ENCODE measurements at regions of chr1 and their contacts with region 1.

Region 1: DNA sequence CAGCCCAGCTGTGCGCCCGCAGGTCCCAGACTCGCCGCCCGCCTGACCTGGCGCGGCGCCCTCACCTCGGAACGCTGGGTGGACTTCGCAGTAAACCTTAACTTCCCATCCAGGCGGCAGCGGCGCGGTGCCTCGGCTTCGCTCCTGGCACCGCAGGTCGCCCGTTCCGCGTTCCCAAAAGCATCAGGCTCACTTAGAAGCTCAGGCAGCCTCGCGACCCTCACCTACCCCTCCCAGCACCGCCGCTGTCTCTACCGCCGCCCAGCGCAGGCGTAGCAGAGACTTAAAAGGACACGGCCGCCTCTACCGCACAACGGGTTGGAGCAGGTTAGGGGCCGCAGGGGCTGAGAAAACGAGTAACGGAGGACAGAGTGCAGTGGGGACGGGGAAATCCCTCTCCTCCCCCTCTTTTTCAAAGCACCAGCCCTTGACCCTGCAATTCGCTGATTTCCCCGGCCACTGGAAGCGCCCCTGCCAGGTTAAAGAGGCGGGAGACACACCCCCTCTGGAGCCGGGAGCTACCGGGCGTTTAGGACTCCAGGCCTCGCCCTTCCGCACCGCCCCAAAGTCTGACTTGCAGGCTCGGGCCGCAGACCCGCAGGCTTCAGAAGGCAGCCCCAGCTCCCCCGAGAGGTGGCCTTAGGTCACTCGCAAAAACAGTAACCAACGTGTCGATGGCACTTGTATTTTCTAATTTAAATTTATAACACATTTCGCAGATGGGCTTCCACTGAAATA is 328.5 kb downstream of the FAM72C start:
- DNase-seq: no peak
- H3K4me3 ChIP-seq: no peak overlapping the region
- H3K27ac ChIP-seq: no peak overlapping the region
- H3K4me1 ChIP-seq: no peaks in the 10 kb centered on the region
- H3K27me3 ChIP-seq: peaks cover 57% of the 10 kb centered on the region
- CTCF ChIP-seq: no peak

Region 2: DNA sequence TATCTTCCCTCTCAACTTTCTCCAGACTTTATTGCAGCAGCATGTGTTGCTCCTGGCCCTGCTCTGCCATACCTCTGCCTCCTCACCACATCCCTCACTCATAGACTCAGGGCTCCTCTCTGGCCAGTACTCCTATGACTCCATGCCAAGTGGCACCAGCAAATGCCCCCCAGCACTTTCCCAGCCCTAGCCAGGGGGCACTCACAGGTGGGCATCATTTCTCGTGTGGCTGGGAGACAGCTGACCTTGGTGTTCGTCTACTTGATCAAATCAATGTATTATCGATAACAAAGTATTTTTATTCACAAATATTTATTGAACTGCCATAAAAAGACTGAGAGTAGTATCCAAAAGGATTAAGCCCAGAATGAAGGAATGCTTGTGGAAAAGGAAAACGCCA is 89.7 kb before region 1 on chr1:
- CTCF ChIA-PET with region 1: no interaction called
- POLR2A ChIA-PET with region 1: interaction called, 17 read pairs
- intact Hi-C with region 1: no loop called
- DNase-seq: no peak
- H3K4me3 ChIP-seq: no peak overlapping the region
- H3K27ac ChIP-seq: no peak overlapping the region
- H3K4me1 ChIP-seq: no peaks in the 10 kb centered on the region
- H3K27me3 ChIP-seq: no peaks in the 10 kb centered on the region
- CTCF ChIP-seq: no peak

Region 3: GRCh38 chr1:143699731-143700130 is 56.4 kb after region 1 on chr1:
- CTCF ChIA-PET with region 1: no interaction called
- POLR2A ChIA-PET with region 1: no interaction called
- intact Hi-C with region 1: loop called (anchors 10 kb)
- DNase-seq: no peak
- H3K4me3 ChIP-seq: no peak overlapping the region
- H3K27ac ChIP-seq: no peak overlapping the region
- H3K4me1 ChIP-seq: no peaks in the 10 kb centered on the region
- H3K27me3 ChIP-seq: peaks cover 61% of the 10 kb centered on the region
- CTCF ChIP-seq: no peak

Measured in A673 (cell line).